K562 (cell line): ENCODE measurements at regions of chr10 and their contacts with region 1.

Region 1: DNA sequence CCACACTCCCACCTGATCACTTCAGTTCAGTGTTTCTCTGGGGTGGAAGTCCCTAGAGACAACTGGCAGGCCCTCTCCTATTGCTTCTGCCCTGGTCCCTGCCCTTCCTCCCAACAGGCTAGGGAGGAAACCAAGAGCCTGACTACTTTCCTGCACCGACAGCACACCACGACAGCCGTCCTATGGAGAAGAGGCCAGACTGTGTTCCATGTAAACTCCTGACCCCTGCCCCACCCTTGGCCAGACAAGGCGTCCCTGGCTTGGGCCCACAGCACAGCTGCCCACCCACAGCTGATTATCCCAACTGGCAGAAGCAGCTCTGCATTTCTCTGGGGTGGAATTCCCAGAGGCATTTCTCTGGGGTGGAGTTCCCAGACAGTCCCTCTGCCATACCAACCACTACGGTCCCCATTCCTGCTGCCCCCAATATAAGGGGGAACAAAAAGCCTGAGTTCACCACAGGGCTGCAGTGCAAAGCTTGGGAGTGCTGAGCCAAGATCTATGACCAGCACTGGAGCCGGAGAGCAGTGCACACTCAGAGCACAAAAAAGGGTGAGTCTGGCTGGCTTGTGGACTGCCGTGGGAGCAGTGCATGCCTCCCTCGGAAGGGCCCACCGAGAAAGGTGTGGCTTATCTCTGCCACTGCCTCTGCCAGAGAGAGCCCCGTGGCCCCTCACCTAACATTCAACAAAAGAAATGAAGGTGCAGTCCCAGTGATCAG is 193.4 kb downstream of the HPSE2 start:
- DNase-seq: no peak
- ATAC-seq: peak; percentile 32; the same call in 2 of the 3 replicates
- H3K4me3 ChIP-seq: no peak overlapping the region
- H3K27ac ChIP-seq: no peak overlapping the region; the same call in 2 of the 3 replicates
- H3K4me1 ChIP-seq: peaks cover 0 to 5% of the 10 kb centered on the region in 2 experiments; a peak in 1 of 5 replicates
- H3K27me3 ChIP-seq: no peaks in the 10 kb centered on the region
- CTCF ChIP-seq: no peak
- EP300 ChIP-seq: no peak
- POLR2A ChIP-seq: no peak
- RAD21 ChIP-seq: no peak

Region 2: GRCh38 chr10:98446151-98446660 is 596.0 kb before region 1 on chr10:
- CTCF ChIA-PET with region 1: no interaction called
- POLR2A ChIA-PET with region 1: no interaction called
- in situ Hi-C with region 1: no loop called
- intact Hi-C with region 1: no loop called
- DNase-seq: peak in 1 of 4 experiments; percentile 33
- ATAC-seq: peak; percentile 84
- H3K4me3 ChIP-seq: peak overlapping the region; percentile 85
- H3K27ac ChIP-seq: peak overlapping the region; percentile 85
- H3K4me1 ChIP-seq: peaks cover 5 to 12% of the 10 kb centered on the region in 2 experiments; a peak in 4 of 5 replicates
- H3K27me3 ChIP-seq: no peaks in the 10 kb centered on the region
- CTCF ChIP-seq: no peak
- EP300 ChIP-seq: no peak
- POLR2A ChIP-seq: no peak
- RAD21 ChIP-seq: no peak

Region 3: GRCh38 chr10:98758463-98758862 is 283.7 kb before region 1 on chr10:
- CTCF ChIA-PET with region 1: no interaction called
- POLR2A ChIA-PET with region 1: no interaction called
- in situ Hi-C with region 1: loop called (anchors 10 kb)
- intact Hi-C with region 1: no loop called
- DNase-seq: no peak
- ATAC-seq: no peak
- H3K4me3 ChIP-seq: no peak overlapping the region
- H3K27ac ChIP-seq: no peak overlapping the region
- H3K4me1 ChIP-seq: no peaks in the 10 kb centered on the region
- H3K27me3 ChIP-seq: no peaks in the 10 kb centered on the region
- CTCF ChIP-seq: no peak
- EP300 ChIP-seq: no peak
- POLR2A ChIP-seq: no peak
- RAD21 ChIP-seq: no peak

Region 4: DNA sequence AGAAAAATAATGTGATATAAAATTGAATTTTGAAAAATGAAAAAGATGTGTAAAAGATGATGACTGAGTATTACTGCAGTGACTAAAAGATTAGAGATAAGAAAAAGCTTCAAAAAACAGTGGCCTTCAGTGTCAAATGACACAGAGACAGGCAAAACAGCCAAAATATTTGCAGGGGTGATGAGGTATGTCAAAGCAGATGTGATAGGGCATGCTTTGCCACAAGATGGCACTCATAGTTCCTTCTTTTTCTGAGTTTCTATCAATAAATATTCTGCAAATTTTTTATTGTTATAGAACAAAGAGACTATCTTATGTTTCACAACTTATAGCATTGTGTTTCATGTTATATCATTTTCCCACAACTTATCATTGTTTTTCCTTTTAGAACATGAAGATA is 251.4 kb before region 1 on chr10:
- CTCF ChIA-PET with region 1: no interaction called
- POLR2A ChIA-PET with region 1: no interaction called
- in situ Hi-C with region 1: no loop called
- intact Hi-C with region 1: loop called (anchors 5 kb)
- DNase-seq: peak in 3 of 4 experiments; percentile 11 to 43 (median 39)
- ATAC-seq: peak; percentile 64
- H3K4me3 ChIP-seq: no peak overlapping the region
- H3K27ac ChIP-seq: no peak overlapping the region
- H3K4me1 ChIP-seq: no peaks in the 10 kb centered on the region
- H3K27me3 ChIP-seq: no peaks in the 10 kb centered on the region
- CTCF ChIP-seq: peak in 2 of 3 experiments; percentile 25 to 54; a peak in 4 of 6 replicates
- EP300 ChIP-seq: no peak
- POLR2A ChIP-seq: no peak
- RAD21 ChIP-seq: peak; percentile 36 to 64; a peak in 3 of 4 replicates